Activated naive CD4-positive, alpha-beta T cell treated with anti-CD3 and anti-CD28 coated beads for 36 hours (primary cell): ENCODE measurements at regions of chr19 and their contacts with region 1.

Region 1: GRCh38 chr19:52993323-52994178 is 20.2 kb upstream of the ERVV-1 start:
- DNase-seq: peak; percentile 91
- H3K4me3 Mint-ChIP-seq: peak overlapping the region; percentile 77
- H3K27ac Mint-ChIP-seq: no peak overlapping the region
- H3K4me1 Mint-ChIP-seq: peaks cover 13% of the 10 kb centered on the region
- H3K27me3 Mint-ChIP-seq: peaks cover 2% of the 10 kb centered on the region

Region 2: GRCh38 chr19:52248241-52248640 is 745.3 kb before region 1 on chr19:
- CTCF ChIA-PET with region 1: no interaction called
- intact Hi-C with region 1: loop called (anchors 1 kb)
- DNase-seq: peak; percentile 85
- H3K4me3 Mint-ChIP-seq: no peak overlapping the region
- H3K27ac Mint-ChIP-seq: no peak overlapping the region
- H3K4me1 Mint-ChIP-seq: no peaks in the 10 kb centered on the region
- H3K27me3 Mint-ChIP-seq: no peaks in the 10 kb centered on the region

Region 3: DNA sequence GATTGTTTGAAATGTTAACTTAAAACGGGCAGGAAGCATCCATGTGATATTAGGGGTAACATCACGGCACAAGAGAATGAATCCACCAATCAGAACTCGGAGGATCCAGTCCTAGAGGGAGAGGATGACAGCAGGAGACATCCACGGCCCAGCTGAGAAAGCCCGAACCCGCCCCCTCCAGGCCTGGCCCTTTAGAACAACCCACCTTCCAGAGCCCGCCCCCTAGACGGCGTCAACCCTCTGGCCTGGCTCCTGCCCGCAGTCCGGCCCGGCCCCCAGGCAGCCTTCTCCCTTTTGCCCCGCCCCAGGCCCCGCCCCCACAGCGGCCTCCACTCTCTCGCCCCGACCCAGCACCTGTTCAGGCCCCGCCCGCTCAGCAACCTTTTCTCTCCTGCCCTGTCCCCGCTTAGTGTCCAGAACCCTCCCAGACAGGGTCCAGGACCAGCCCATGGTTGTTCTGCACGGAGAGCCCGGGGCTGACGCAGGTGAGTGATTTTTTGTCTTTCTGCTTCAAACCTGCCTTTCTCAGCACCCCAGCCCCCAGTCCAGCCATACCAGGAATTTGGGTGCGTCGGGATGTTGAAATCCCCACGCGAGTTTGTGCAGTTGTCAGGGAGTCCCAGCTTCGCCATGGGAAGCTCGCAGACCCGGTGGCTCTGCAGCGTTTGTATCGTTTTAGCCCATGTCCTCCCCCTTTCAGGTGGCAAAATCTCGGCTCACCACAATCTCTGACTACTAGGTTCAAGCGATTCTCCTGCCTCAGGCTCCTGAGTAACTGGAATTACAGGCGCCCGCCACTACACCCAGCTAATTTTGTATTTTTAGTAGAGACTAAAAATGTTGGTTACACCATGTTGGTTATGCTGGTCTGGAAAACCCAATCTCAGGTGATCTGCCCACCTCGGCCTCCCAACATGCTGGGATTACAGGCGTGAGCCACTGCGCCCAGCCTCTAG is 47.0 kb before region 1 on chr19:
- CTCF ChIA-PET with region 1: no interaction called
- intact Hi-C with region 1: no loop called
- DNase-seq: no peak
- H3K4me3 Mint-ChIP-seq: no peak overlapping the region
- H3K27ac Mint-ChIP-seq: no peak overlapping the region
- H3K4me1 Mint-ChIP-seq: peaks cover 3% of the 10 kb centered on the region
- H3K27me3 Mint-ChIP-seq: no peaks in the 10 kb centered on the region